ENCODE measurements at regions of chr17 and their contacts with region 1.

Region 1: GRCh38 chr17:31858642-31859473 is at the start of gene COPRS:
- DNase-seq: peak; percentile 88
- ATAC-seq: peak; percentile 94
- H3K4me3 ChIP-seq: peak within 1 kb of the TSS; percentile 46 to 71 (median 54)
- H3K4me3 Mint-ChIP-seq: peak within 1 kb of the TSS; percentile 93
- H3K27ac ChIP-seq: peak within 1 kb of the TSS in 1 of 2 donors; percentile 48
- H3K27ac Mint-ChIP-seq: peak within 1 kb of the TSS; percentile 89
- H3K4me1 ChIP-seq: peaks cover 11 to 16% of the 10 kb centered on the region in 2 donors
- H3K4me1 Mint-ChIP-seq: peaks cover 24% of the 10 kb centered on the region
- H3K27me3 ChIP-seq: no peaks in the 10 kb centered on the region
- H3K27me3 Mint-ChIP-seq: no peaks in the 10 kb centered on the region
- CTCF ChIP-seq: no peak
- total RNA-seq, gene COPRS: 17.1 and 17.6 TPM in 2 replicates

Region 2: GRCh38 chr17:31533546-31534155 is 325.2 kb before region 1 on chr17:
- CTCF ChIA-PET with region 1: interaction called, 4 read pairs
- POLR2A ChIA-PET with region 1: no interaction called
- intact Hi-C with region 1: loop called (anchors 5 kb)
- DNase-seq: no peak
- ATAC-seq: no peak
- H3K4me3 ChIP-seq: no peak overlapping the region
- H3K4me3 Mint-ChIP-seq: no peak overlapping the region
- H3K27ac ChIP-seq: no peak overlapping the region
- H3K27ac Mint-ChIP-seq: no peak overlapping the region
- H3K4me1 ChIP-seq: peaks cover 41 to 53% of the 10 kb centered on the region in 2 donors
- H3K4me1 Mint-ChIP-seq: peaks cover 45% of the 10 kb centered on the region
- H3K27me3 ChIP-seq: no peaks in the 10 kb centered on the region
- H3K27me3 Mint-ChIP-seq: no peaks in the 10 kb centered on the region
- CTCF ChIP-seq: no peak

Region 3: DNA sequence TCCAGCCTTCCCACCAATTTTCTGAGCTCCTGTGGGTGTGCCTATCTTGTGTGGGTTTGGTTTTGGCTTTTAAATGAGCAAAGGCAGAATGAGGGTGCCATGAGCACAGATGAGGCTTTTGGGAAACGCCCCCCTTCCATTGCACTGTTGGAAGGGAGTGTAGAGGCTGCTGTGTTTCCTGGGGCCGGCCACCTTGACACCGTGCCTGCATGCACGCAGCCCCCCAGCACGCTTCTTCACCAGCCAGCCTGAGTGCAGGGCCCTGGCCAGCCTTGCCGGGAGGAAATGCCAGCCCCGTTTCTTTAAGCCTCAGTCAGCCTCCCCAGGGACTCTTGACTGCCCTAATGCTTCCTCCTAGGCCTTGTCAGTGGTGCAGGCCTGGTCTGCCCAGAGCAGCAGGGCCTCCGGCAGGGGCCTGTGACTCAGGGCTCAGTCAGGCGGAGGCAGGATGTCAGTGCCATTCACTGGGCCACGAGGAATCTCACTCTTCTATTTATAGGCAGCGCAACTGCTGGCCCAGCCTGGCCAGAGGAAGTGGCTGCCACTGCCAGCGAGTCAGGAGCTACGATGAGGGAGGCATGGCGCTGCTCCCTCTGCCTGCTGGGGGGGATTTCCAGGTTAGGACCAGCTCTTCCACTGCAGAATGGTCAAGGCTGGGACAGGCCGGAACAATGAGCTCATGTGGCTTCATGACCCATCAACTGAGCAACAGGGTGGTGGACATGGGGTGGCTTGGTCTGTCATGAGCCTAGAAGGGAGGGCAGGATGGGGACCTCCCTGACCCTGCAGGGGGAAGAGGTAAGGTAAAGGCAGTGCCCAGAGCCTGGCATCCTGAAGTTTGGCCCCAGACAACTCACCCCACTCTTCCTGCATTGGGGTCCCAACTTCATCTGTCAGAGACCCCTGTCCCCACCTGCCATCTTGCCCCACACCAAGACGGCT is 262.2 kb before region 1 on chr17:
- CTCF ChIA-PET with region 1: no interaction called
- POLR2A ChIA-PET with region 1: no interaction called
- intact Hi-C with region 1: loop called (anchors 1 kb)
- DNase-seq: peak; percentile 73
- ATAC-seq: peak; percentile 99
- H3K4me3 ChIP-seq: no peak overlapping the region
- H3K4me3 Mint-ChIP-seq: peak overlapping the region; percentile 32
- H3K27ac ChIP-seq: peak overlapping the region; percentile 24 to 52
- H3K27ac Mint-ChIP-seq: peak overlapping the region; percentile 81
- H3K4me1 ChIP-seq: peaks cover 19 to 24% of the 10 kb centered on the region in 2 donors
- H3K4me1 Mint-ChIP-seq: peaks cover 34% of the 10 kb centered on the region
- H3K27me3 ChIP-seq: no peaks in the 10 kb centered on the region
- H3K27me3 Mint-ChIP-seq: no peaks in the 10 kb centered on the region
- CTCF ChIP-seq: no peak

Region 4: DNA sequence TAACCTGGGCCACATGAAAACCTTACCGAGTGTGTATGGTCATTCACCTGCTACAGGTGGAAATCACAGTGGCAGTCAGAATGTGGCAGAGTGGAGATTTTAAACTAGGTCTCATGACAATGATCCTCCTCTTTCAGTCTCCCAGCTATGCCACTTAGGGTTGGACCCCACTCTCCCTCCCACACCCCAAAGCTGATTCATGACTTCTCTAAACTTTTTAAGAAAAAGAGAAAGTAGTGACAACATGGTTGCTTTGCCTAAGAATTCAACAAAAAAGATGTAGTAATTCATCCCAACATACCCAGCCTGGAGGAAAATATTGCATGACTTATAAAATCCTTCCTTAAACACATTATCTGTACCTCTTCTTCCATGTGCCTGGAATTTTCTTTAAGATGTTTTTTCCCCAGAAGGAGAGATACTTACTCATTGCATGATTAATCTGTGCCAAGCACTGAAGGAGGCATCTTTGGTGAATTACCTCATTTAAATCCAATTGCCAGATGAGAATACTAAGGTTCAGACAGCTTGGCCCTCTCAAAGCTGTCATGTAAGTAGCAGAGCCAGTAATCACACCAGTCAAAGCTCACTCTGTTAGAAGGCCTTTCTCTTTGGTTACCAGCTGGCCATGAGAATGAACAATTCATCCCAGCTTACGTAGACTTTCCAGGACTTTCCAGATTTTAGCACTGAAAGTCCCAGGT is 119.7 kb before region 1 on chr17:
- CTCF ChIA-PET with region 1: no interaction called
- POLR2A ChIA-PET with region 1: interaction called, 11 read pairs
- intact Hi-C with region 1: no loop called
- DNase-seq: no peak
- ATAC-seq: no peak
- H3K4me3 ChIP-seq: no peak overlapping the region
- H3K4me3 Mint-ChIP-seq: no peak overlapping the region
- H3K27ac ChIP-seq: no peak overlapping the region
- H3K27ac Mint-ChIP-seq: no peak overlapping the region
- H3K4me1 ChIP-seq: no peaks in the 10 kb centered on the region
- H3K4me1 Mint-ChIP-seq: peaks cover 2% of the 10 kb centered on the region
- H3K27me3 ChIP-seq: peaks cover 0 to 5% (median 0%) of the 10 kb centered on the region in 4 experiments
- H3K27me3 Mint-ChIP-seq: peaks cover 30% of the 10 kb centered on the region
- CTCF ChIP-seq: no peak

Region 5: DNA sequence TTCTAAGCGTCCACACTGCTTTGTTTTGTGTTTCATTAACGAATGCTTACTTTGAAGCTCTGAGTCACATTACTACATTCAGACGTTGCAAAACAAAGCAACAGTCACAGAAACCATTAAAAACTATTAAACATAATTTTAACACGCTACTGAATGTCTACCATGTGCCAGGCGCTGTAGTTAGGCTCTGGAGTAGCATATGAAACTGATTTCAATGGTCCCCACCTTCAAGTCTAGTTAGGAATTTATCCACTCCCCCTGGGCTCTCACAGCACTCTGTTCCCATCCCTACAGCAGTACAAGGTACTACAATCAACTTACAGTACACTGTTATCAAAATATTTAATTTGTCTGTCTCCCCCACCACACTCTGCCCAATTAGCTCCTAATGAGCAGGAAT is 42.0 kb after region 1 on chr17:
- CTCF ChIA-PET with region 1: interaction called, 3 read pairs
- POLR2A ChIA-PET with region 1: interaction called, 3 read pairs
- intact Hi-C with region 1: loop called (anchors 1 kb)
- DNase-seq: no peak
- ATAC-seq: no peak
- H3K4me3 ChIP-seq: peak overlapping the region; percentile 76 to 95 (median 90)
- H3K4me3 Mint-ChIP-seq: no peak overlapping the region
- H3K27ac ChIP-seq: peak overlapping the region; percentile 47 to 78
- H3K27ac Mint-ChIP-seq: no peak overlapping the region
- H3K4me1 ChIP-seq: peaks cover 6 to 10% of the 10 kb centered on the region in 2 donors
- H3K4me1 Mint-ChIP-seq: peaks cover 5% of the 10 kb centered on the region
- H3K27me3 ChIP-seq: no peaks in the 10 kb centered on the region
- H3K27me3 Mint-ChIP-seq: no peaks in the 10 kb centered on the region
- CTCF ChIP-seq: no peak

Measured in B cell (primary cell).